Left cardiac atrium (tissue), 4 donors: ENCODE measurements at regions of chr6 and their contacts with region 1.

Region 1: DNA sequence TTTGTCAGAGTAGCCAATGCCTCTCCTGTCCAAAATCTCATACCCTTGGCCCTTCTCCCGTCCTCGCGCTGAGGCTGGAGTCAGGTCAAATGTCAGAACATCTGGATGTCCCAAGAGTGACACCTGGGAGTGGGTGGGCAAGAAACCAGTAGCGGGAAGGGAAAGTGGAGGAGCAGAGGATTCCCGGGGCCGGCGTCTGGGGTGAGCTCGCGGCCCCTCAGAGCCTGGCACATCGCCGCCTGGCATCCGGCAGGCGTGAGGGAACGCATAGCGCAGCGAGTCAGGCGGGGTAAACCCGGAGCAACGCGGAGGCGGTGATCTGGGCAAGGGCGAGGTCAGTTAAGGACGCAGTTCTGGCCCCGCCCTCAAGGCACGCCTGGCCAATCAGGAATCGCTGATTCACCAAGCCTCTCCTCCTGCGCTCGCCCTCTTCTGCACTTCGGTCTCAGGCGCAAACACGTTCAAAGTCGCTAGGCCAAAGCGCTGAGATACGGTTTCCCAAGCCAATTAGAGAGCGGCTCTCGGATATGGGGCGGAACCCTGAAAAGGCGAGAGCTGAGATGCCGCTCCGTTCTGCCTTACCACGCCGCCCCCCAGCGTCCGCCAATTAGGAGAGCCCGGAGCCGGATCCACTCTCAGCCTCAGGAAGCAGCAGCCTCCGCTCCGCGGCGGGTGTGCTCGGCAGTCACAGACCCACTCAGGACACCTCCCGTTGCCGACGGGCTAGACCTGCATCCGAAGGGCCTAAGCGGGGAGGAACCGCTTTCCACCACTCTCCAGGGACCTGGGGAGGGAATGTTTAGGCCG is 22.5 kb downstream of the VPS52 start:
- DNase-seq: peak; percentile 98
- ATAC-seq: peak; percentile 95 to 97

Region 2: GRCh38 chr6:32894080-32895005 is 354.8 kb before region 1 on chr6:
- intact Hi-C with region 1: loop called in 1 of 2 experiments (anchors 10 kb)
- DNase-seq: peak; percentile 92
- ATAC-seq: peak; percentile 100

Region 3: GRCh38 chr6:33014841-33015634 is 234.1 kb before region 1 on chr6:
- intact Hi-C with region 1: loop called (anchors 2 to 10 kb)
- DNase-seq: no peak
- ATAC-seq: peak; percentile 62 to 71

Region 4: DNA sequence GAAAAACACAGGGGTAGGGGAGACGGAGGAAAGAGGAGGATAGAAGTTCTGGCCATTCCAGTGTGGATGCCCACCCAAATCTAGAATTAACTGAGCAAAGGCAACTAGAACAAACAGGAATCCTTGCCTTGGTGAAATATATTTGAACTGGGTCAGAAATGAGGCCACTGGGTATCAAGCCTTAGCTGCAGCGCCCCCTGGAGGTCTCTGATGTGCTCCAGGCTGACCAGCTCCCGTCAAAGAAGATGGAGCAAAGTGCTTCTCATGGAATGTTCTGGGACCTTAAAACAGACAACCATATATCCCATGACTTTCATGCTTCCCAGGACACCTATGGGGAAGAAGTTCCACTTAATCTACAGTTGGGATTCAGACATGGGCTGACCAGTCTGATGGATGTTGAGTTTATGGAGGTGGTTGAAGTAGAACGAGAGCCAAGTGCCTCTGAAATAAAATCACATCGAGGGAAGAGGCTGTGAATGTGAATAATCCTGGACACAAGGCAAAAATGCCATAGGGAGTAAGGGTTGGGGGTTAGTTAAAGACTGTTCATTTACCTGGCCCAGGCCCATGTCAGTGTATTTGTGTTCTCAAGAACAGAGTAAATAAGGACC is 122.9 kb before region 1 on chr6:
- intact Hi-C with region 1: loop called in 1 of 2 experiments (anchors 5 kb)
- DNase-seq: peak; percentile 82
- ATAC-seq: peak in 1 of 2 donors; percentile 51

Region 5: DNA sequence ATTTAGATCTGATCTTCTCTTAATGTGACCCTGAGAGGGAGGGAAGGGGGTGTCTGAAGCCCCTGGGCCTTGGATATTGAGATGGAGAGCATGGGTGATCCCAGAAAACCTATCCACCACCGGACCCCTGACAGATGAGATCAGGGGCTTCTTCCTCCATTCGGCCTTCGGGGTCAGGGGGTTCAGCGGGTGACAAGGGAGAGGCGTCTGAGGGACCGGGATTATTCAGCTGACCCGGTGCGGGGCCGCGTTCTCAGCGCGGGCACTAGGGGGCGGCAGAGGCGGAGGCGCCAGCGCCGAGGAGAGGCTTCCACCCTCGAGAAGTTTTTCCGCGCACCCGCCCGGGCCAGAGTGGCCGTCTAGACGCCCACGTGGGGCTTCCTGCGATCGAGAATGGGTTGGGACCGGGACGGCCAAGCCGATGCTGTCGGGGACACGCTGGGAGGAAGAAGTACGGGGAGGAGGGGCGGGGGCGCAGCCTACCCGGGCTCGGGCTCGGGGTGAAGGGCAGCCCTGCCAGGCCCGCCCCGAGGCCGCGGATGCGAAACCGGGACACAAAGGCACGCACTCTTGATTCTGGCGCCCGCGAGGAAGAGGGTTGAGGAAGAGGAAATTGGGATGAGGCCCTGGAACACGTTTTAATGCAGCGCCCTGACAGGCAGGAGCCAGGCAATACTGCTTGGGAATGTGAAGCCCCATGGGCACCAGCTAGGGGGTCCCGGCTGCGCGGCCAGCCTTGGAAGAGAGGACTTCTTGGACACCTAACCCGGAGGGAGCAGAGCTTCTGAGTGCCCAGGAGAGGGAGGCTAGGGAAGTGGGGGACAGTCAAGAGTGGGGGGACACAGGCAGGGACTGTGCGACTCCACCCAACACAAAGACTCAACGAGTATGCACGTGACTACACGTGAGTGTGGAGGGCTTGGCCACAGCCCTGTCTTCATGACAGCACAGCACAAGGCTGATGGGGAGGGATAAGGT is 87.5 kb before region 1 on chr6:
- intact Hi-C with region 1: loop called (anchors 1 to 5 kb)
- DNase-seq: peak; percentile 88
- ATAC-seq: peak; percentile 93 to 94

Region 6: GRCh38 chr6:33213166-33213988 is 35.8 kb before region 1 on chr6:
- intact Hi-C with region 1: loop called in 1 of 2 experiments (anchors 5 kb)
- DNase-seq: peak; percentile 48
- ATAC-seq: peak; percentile 28 to 43

Region 7: DNA sequence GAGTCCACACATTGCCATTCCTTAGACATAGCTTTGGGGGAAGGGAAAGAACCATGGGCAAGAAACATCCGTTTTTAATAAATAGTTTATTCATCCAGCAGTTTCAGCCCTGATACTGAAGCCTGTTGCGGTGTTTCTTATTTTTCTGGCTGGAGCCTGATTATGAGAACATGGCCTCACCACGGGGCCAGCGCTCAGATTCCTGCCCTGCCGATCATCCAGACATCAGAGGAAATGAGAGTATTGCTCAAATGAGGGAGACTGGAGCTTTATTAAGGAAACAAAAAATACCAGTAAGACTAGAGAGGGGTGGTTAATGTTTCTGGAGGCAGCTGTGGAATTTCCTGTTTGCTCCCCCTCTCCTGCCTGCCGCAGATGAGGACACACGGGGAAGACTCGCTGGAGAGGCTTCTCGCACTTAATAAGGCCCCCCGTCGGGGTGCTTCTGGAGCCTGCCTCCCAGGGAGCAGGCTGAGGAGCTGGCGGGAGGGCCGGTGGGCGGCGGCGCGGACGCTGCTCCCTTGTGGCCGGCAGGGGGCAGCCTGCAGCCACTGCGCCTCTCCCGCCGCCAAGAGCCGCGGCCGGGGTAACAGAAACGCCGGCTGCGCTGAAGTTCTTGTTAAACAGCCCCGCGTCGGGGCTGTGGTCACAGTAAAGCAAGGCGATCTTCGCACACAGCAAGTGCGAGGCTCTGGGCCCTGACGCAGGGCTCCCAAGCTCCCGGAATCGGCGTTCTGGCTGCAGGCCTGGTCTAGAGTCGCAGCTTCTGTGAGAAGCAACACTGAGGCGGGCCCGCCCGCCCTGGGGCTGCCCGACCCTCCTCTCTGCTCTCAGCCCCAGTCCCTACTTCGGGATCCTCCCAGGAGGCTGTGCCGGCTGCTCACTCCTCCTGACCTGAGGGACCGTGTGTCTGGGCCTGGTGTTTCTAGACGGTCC is 522.3 kb after region 1 on chr6:
- intact Hi-C with region 1: no loop called
- DNase-seq: peak; percentile 80
- ATAC-seq: peak; percentile 84